Activated T-helper 1 cell treated with anti-CD3 and anti-CD28 coated beads, Interleukin-12 subunit alpha, Interleukin-12 subunit beta, Interleukin-2, Interleukin-4 antibody, amounts not matched to agents 30 ng/mL and 10 ng/mL and 1 ng/mL, durations not matched to agents 14 hours and 24 hours and 36 hours (primary cell): ENCODE measurements at regions of chr4 and their contacts with region 1.

Region 1: GRCh38 chr4:123396307-123397143 is at the start of gene SPRY1:
- DNase-seq: peak; percentile 77
- H3K4me3 Mint-ChIP-seq: peak within 1 kb of the TSS; percentile 96
- H3K27ac Mint-ChIP-seq: peak within 1 kb of the TSS; percentile 96
- H3K4me1 Mint-ChIP-seq: peaks cover 42% of the 10 kb centered on the region
- H3K27me3 Mint-ChIP-seq: peaks cover 14% of the 10 kb centered on the region
- total RNA-seq, gene SPRY1: 47.6 and 49.0 TPM in 2 replicates

Region 2: DNA sequence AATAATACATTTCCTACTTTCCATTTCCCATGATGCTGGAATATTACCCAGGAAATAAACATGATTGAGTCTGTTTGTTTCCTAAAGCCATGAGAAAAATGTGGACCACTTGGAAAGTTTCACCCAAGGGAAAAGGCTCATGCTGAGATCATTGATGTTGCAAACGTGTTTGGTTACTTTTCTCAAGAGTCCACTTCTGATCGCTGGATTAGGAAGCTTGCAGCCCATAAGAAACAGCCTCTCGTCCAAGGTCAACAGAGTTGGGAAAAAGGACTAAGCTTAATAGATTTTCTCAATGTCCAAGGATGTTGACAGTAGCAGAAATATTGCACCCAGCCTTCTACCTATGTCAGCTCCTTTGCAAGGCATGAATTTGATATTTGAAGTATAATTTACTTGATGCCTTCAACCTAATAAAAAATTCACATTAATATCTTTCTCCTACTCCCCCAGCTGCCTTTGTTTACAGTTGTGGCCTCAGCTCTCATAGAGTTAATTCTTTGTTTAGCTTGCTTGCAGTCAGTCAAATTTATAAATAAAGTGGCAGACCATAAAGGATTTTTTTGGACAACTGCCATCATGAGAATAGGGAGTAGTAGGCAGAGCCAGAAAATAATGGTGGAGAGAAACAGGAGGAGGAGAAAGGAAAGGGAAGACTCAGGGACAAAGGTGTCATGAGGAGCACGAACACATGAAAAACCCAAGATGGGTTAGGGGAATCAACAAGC is 1310.0 kb before region 1 on chr4:
- intact Hi-C with region 1: no loop called
- DNase-seq: no peak
- H3K4me3 Mint-ChIP-seq: no peak overlapping the region
- H3K27ac Mint-ChIP-seq: no peak overlapping the region
- H3K4me1 Mint-ChIP-seq: no peaks in the 10 kb centered on the region
- H3K27me3 Mint-ChIP-seq: peaks cover 22% of the 10 kb centered on the region

Region 3: GRCh38 chr4:122700178-122700725 is 696.3 kb before region 1 on chr4:
- intact Hi-C with region 1: loop called (anchors 2 kb)
- DNase-seq: no peak
- H3K4me3 Mint-ChIP-seq: peak overlapping the region; percentile 81
- H3K27ac Mint-ChIP-seq: peak overlapping the region; percentile 95
- H3K4me1 Mint-ChIP-seq: peaks cover 70% of the 10 kb centered on the region
- H3K27me3 Mint-ChIP-seq: peaks cover 2% of the 10 kb centered on the region

Region 4: GRCh38 chr4:123412091-123412505 is 15.6 kb after region 1 on chr4:
- intact Hi-C with region 1: loop called (anchors 1 kb)
- DNase-seq: no peak
- H3K4me3 Mint-ChIP-seq: peak overlapping the region; percentile 66
- H3K27ac Mint-ChIP-seq: peak overlapping the region; percentile 95
- H3K4me1 Mint-ChIP-seq: peaks cover 44% of the 10 kb centered on the region
- H3K27me3 Mint-ChIP-seq: no peaks in the 10 kb centered on the region

Region 5: GRCh38 chr4:123477711-123478209 is 81.2 kb after region 1 on chr4:
- intact Hi-C with region 1: loop called (anchors 1 kb)
- DNase-seq: peak; percentile 67
- H3K4me3 Mint-ChIP-seq: peak overlapping the region; percentile 56
- H3K27ac Mint-ChIP-seq: peak overlapping the region; percentile 89
- H3K4me1 Mint-ChIP-seq: peaks cover 55% of the 10 kb centered on the region
- H3K27me3 Mint-ChIP-seq: no peaks in the 10 kb centered on the region

Region 6: DNA sequence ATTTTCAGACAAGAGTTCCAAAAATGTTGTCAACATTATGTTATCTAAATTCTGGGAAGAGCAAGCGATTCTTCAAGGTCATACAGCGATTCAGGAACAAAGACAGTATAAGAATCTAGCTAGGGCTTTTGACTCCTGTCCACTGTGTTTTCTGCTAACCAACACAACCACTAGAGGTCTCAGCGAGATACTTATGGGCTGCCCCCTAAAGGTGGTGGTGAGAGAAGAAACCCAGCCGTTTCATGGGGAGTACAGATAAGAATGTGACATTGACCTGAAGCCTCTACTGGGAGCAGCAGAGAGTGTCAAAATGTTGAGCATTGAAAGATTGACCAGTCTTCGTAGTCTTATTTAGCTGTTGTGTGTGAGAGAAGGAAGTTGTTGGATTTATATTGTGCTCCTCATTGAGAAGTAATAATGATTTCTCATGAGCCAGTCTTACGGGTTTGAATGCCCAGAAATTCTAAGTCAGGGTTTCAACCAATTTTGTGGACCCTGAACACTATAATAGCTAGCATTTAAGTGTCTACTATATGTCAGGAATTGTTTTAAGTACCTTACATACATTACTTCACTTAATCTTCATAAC is 168.3 kb after region 1 on chr4:
- intact Hi-C with region 1: loop called (anchors 2 kb)
- DNase-seq: peak; percentile 57
- H3K4me3 Mint-ChIP-seq: no peak overlapping the region
- H3K27ac Mint-ChIP-seq: no peak overlapping the region
- H3K4me1 Mint-ChIP-seq: peaks cover 7% of the 10 kb centered on the region
- H3K27me3 Mint-ChIP-seq: peaks cover 22% of the 10 kb centered on the region

Region 7: DNA sequence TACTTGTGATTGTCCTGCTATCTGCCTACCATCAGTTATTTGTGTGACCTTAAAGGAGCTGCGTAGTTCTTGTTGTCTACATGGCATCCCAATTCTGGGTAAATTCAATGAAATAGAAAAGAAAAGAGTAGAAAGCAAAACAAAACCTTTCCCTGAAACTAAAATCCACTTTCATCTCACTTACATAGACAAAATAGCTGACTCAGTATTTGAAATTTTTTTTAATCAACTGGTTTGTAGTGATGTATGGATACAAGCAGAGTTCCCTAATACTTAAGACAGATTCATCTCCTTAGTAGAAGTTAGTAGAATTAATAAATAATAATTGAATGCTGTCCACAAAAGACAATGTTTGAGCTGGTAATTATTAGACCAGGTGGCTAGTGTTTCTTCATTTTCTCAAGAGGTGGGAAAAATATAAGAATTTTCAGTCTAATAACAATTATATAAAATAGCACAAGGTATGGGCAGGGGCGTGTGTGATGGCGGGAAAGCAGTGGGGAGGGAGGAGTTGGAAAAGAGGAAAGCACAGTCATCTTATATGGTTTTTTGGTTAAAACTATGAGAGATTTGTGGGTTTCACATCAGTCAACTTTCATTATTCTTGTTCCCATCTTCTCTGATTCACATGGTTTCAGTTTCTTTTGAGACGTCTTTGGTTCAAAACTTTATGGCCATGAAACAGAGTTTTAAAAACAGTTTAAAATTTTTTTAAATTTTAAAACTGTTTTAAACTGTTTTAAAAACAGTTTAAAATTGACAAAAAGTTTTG is 275.3 kb after region 1 on chr4:
- intact Hi-C with region 1: loop called (anchors 1 kb)
- DNase-seq: peak; percentile 14
- H3K4me3 Mint-ChIP-seq: no peak overlapping the region
- H3K27ac Mint-ChIP-seq: peak overlapping the region; percentile 7
- H3K4me1 Mint-ChIP-seq: peaks cover 43% of the 10 kb centered on the region
- H3K27me3 Mint-ChIP-seq: peaks cover 46% of the 10 kb centered on the region